ENCODE measurements at regions of chr14 and their contacts with region 1.

Region 1: DNA sequence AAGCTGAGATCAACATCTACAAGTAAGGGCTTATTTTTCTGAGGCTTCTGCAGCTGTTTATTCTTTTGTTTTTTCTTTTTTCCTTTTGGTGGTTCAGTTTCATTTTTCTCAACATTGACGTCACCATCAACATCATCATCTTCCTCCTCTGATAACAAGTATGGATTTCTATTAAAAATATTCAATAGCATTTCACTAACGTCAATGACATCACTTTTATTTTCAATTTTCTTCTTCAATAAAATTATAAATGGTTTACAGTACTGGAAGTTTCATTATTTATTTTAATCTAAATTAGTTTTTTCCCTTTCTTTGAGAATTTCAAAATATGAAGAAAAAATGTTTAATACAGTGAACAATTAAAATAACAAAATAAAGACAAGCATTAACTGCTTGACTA is 23.9 kb downstream of the NEMF start:
- DNase-seq: no peak
- ATAC-seq: no peak
- H3K4me3 ChIP-seq: no peak overlapping the region
- H3K27ac ChIP-seq: no peak overlapping the region
- H3K4me1 ChIP-seq: no peaks in the 10 kb centered on the region
- H3K27me3 ChIP-seq: no peaks in the 10 kb centered on the region

Region 2: GRCh38 chr14:48936362-48936761 is 892.3 kb before region 1 on chr14:
- intact Hi-C with region 1: no loop called
- DNase-seq: no peak
- ATAC-seq: no peak
- H3K4me3 ChIP-seq: no peak overlapping the region
- H3K27ac ChIP-seq: no peak overlapping the region
- H3K4me1 ChIP-seq: no peaks in the 10 kb centered on the region
- H3K27me3 ChIP-seq: no peaks in the 10 kb centered on the region

Region 3: DNA sequence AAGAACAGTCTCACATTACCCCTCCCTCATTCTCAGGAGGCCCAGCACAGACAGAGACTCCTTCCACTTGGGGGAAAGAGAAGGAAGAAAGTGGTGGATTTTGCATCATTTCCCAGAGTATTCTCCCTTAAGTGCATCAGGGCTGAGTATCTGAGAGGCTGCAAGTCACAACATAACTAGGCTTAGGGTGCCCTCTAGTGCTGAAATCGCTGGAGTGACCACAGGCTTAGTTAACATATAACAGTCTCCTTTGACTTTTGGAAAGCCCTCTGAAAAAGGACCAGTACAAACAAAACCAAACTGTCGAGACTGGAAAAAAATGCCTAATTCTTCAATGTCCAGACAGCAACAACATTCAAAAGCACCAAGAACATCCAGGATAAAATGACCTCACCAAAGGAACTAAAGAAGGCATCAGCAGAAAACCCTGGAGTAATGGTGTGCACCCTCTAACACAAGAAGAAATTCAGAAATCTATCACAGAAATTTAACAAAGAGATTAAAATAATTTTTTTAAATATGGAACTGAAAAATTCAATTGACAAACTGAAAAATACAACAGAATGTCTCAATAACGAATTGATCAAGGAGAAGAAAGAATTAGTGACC is 654.8 kb before region 1 on chr14:
- intact Hi-C with region 1: no loop called
- DNase-seq: no peak
- ATAC-seq: no peak
- H3K4me3 ChIP-seq: no peak overlapping the region
- H3K27ac ChIP-seq: no peak overlapping the region
- H3K4me1 ChIP-seq: no peaks in the 10 kb centered on the region
- H3K27me3 ChIP-seq: no peaks in the 10 kb centered on the region

Region 4: DNA sequence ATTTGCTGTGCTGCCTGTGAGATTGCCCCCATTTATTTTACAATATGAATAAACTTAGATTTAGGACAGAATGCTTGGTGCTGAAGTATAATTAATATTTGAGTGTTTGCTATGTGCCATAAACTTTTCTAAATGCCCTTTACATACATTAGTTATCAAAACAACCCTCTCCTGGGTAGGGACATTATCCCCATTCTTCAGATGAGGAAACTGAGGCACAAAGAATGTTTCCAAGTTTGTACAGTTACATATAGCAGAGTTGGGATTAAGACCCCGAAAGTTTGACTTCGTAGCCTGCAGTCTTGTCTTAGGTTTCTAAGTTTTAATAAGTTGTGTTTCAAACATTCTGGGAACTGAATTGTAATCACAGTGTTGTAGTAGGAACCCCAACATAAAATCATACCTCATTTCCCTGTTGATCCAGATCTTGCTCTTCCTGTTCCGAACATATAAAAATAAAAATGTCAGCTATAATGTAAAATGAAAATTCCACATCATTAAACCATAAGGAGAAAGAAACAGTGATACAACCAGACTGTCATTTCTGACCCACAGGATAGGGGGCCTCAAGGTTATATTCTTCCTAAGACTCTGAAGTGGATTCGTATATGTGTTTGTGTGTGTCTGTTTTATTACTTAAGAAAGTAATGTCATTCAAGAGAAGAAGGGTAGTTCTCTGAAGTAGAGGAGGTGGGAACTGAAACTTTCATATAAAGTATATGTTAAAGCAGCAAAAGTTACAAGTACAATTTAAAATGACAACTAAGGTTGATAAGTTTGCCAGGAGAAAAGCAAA is 42.1 kb before region 1 on chr14:
- intact Hi-C with region 1: loop called in 1 of 2 experiments (anchors 10 kb)
- DNase-seq: no peak
- ATAC-seq: no peak
- H3K4me3 ChIP-seq: no peak overlapping the region
- H3K27ac ChIP-seq: no peak overlapping the region
- H3K4me1 ChIP-seq: no peaks in the 10 kb centered on the region
- H3K27me3 ChIP-seq: no peaks in the 10 kb centered on the region

Region 5: GRCh38 chr14:49862089-49862673 is 33.5 kb after region 1 on chr14:
- intact Hi-C with region 1: no loop called
- DNase-seq: peak; percentile 87 to 93
- ATAC-seq: peak; percentile 94
- H3K4me3 ChIP-seq: peak overlapping the region; percentile 55 to 99
- H3K27ac ChIP-seq: peak overlapping the region; percentile 99 to 100
- H3K4me1 ChIP-seq: no peaks in the 10 kb centered on the region
- H3K27me3 ChIP-seq: no peaks in the 10 kb centered on the region

Region 6: DNA sequence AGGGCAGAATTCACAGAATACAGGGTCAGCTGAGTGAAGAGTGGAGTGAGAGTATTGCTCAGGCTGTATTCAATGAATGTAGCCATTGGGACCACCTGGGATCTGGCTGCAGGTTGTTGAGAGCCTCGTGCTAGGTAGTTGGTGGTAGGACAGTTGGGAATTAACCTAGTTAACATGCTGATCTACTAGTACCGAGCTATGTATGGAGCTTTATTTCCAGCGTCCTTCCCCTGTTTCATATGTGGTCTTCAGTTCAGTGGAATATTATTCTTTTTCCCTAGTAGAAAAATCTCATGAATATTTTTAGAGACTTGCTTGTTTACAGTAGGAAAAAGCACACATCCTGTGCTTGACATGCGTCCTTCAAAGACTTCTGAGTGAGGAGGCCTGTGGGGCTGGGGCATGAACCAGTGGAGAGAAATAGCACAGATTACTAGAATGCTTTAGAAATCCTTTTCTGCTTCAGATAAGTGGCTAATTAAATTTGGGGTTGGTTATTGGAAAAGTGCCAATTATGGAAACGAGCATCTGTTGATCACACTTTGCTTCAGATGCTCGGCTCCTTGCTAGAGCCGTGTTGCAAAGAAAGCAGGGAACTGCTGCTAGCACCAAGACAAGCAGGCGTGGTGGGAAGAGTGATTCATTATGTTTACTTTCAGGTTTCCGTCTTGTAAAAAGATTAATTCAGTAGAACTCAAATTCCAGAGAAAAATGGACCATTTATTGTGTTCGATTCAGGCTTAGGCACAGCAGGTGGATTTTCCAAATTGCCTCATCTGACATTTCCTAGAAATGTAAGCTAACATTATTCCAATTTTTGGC is 117.9 kb after region 1 on chr14:
- intact Hi-C with region 1: no loop called
- DNase-seq: no peak
- ATAC-seq: peak; percentile 60
- H3K4me3 ChIP-seq: no peak overlapping the region
- H3K27ac ChIP-seq: no peak overlapping the region
- H3K4me1 ChIP-seq: peaks cover 0 to 1% of the 10 kb centered on the region in 2 donors
- H3K27me3 ChIP-seq: no peaks in the 10 kb centered on the region